GM12878 (cell line): ENCODE measurements at regions of chr1 and their contacts with region 1.

Region 1: DNA sequence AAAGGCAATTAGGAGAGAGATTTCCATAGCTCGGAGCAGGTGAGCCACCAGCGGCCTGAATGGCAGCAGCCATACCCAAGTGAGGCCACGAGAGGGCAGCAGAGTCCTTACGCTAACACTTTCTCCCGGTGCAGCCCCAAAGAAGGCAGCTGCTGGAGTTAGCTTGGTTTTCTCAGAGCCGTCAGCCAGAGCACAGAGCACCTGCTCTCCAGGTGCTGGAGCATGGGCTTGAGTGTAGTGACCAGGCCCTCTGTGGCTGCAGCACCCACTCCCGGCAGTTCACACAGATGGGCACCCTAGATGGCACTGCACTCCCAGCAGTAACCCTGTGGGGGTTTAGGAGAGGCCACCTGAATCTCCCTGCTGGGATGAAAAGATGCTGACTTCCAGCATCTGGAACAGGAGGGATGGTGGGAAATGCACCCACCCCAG is 45.8 kb downstream of the TMCC2 start:
- DNase-seq: peak; percentile 32
- ATAC-seq: peak; percentile 90
- H3K4me3 ChIP-seq: no peak overlapping the region
- H3K27ac ChIP-seq: no peak overlapping the region
- H3K4me1 ChIP-seq: peaks cover 3% of the 10 kb centered on the region; the same call in 1 of the 2 replicates
- H3K27me3 ChIP-seq: peaks cover 0 to 2% of the 10 kb centered on the region in 2 experiments; a peak in 1 of 4 replicates
- CTCF ChIP-seq: peak; percentile 92 to 98 (median 98)
- EP300 ChIP-seq: peak in 1 of 2 experiments; percentile 38; a peak in 1 of 4 replicates
- POLR2A ChIP-seq: no peak
- RAD21 ChIP-seq: peak; percentile 96

Region 2: GRCh38 chr1:205346956-205347576 is 73.5 kb after region 1 on chr1:
- CTCF ChIA-PET with region 1: interaction called, 12 read pairs
- POLR2A ChIA-PET with region 1: no interaction called
- RAD21 ChIA-PET with region 1: interaction called, 7 read pairs
- SMC1A ChIA-PET with region 1: interaction called, 7 read pairs
- in situ Hi-C with region 1: no loop called
- intact Hi-C with region 1: no loop called
- DNase-seq: no peak
- ATAC-seq: no peak
- H3K4me3 ChIP-seq: no peak overlapping the region
- H3K27ac ChIP-seq: no peak overlapping the region
- H3K4me1 ChIP-seq: no peaks in the 10 kb centered on the region
- H3K27me3 ChIP-seq: peaks cover 15 to 18% of the 10 kb centered on the region in 2 experiments
- CTCF ChIP-seq: no peak
- EP300 ChIP-seq: no peak
- POLR2A ChIP-seq: no peak
- RAD21 ChIP-seq: no peak

Region 3: GRCh38 chr1:205416322-205416721 is 142.8 kb after region 1 on chr1:
- CTCF ChIA-PET with region 1: no interaction called
- POLR2A ChIA-PET with region 1: no interaction called
- RAD21 ChIA-PET with region 1: no interaction called
- SMC1A ChIA-PET with region 1: no interaction called
- in situ Hi-C with region 1: no loop called
- intact Hi-C with region 1: no loop called
- DNase-seq: no peak
- ATAC-seq: no peak
- H3K4me3 ChIP-seq: no peak overlapping the region
- H3K27ac ChIP-seq: no peak overlapping the region
- H3K4me1 ChIP-seq: no peaks in the 10 kb centered on the region
- H3K27me3 ChIP-seq: peaks cover 0 to 6% of the 10 kb centered on the region in 2 experiments; a peak in 3 of 4 replicates
- CTCF ChIP-seq: no peak
- EP300 ChIP-seq: no peak
- POLR2A ChIP-seq: no peak
- RAD21 ChIP-seq: no peak

Region 4: GRCh38 chr1:205430696-205431305 is 157.2 kb after region 1 on chr1:
- CTCF ChIA-PET with region 1: interaction called, 21 read pairs
- POLR2A ChIA-PET with region 1: interaction called, 3 read pairs
- RAD21 ChIA-PET with region 1: interaction called, 3 read pairs
- SMC1A ChIA-PET with region 1: interaction called, 6 read pairs
- in situ Hi-C with region 1: no loop called
- intact Hi-C with region 1: no loop called
- DNase-seq: peak; percentile 13
- ATAC-seq: peak; percentile 85
- H3K4me3 ChIP-seq: peak overlapping the region; percentile 54; the same call in 1 of the 2 replicates
- H3K27ac ChIP-seq: no peak overlapping the region
- H3K4me1 ChIP-seq: peaks cover 3% of the 10 kb centered on the region
- H3K27me3 ChIP-seq: peaks cover 3 to 4% of the 10 kb centered on the region in 2 experiments; a peak in 2 of 4 replicates
- CTCF ChIP-seq: peak; percentile 53 to 85 (median 72)
- EP300 ChIP-seq: peak in 1 of 2 experiments; percentile 38; a peak in 1 of 4 replicates
- POLR2A ChIP-seq: no peak
- RAD21 ChIP-seq: peak; percentile 45

Region 5: DNA sequence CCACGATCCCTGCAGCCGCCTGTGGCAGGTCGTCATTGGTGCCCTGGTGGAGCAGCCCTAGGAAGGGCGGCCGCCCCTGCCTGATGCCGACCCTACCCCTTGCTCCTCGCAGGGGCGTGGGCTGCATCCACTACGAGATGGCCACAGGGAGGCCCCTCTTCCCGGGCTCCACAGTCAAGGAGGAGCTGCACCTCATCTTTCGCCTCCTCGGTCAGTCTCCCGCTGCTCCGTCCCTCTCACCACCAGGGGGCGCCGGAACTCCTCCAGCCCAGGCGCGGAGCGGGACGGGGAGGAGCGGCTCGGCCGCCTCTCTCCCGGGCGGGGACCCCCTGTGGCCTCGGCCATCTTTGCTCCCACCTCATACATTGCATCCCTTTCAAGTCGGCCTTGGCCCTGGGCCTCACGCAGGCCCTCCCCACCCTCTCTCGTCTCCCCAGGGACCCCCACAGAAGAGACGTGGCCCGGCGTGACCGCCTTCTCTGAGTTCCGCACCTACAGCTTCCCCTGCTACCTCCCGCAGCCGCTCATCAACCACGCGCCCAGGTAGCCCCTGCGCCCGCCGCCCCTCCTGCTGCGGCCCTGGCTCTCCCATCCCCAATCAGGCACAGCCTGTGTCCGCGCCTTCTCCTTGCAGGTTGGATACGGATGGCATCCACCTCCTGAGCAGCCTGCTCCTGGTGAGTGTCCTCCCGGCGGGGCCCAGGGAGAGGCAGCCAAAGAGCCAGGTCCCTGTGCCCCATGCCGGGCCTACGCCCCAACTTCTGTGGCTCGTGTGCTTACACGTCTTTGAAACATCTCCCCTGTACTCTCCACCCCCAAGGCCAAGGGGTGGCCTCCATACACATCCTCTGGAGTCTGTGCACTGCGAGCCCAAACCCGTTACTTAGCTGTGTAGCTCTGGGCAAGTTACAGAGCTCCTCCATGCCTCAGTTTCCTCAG is 255.6 kb after region 1 on chr1:
- CTCF ChIA-PET with region 1: interaction called, 29 read pairs
- POLR2A ChIA-PET with region 1: no interaction called
- RAD21 ChIA-PET with region 1: interaction called, 17 read pairs
- SMC1A ChIA-PET with region 1: interaction called, 8 read pairs
- in situ Hi-C with region 1: no loop called
- intact Hi-C with region 1: loop called (anchors 10 kb)
- DNase-seq: no peak
- ATAC-seq: peak; percentile 93
- H3K4me3 ChIP-seq: no peak overlapping the region
- H3K27ac ChIP-seq: no peak overlapping the region
- H3K4me1 ChIP-seq: no peaks in the 10 kb centered on the region
- H3K27me3 ChIP-seq: peaks cover 2 to 3% of the 10 kb centered on the region in 2 experiments; a peak in 3 of 4 replicates
- CTCF ChIP-seq: peak; percentile 78 to 96 (median 92)
- EP300 ChIP-seq: no peak
- POLR2A ChIP-seq: no peak
- RAD21 ChIP-seq: peak; percentile 78